ENCODE measurements at regions of chr13 and their contacts with region 1.

Region 1: DNA sequence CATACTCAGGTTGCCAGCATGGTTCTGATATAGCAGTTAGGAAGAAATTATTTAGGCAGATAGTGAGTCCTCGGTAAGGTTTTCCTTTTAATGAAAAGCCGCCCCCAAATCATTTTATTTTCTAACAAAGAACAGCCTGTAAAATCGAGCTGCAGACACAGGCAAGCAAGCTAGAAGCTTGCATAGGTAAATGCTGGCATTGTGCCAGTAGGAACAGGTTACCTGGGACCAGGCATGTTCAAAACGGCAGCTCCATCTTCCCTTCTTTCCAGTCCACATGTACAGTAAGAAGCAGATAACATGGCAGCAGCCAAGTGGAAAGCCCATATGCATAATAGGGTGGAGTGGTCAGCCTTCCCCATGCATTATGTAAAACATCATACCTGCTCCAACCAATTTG is 71.1 kb downstream of the UGGT2 start:
- DNase-seq: no peak
- ATAC-seq: no peak
- H3K4me3 ChIP-seq: no peak overlapping the region
- H3K27ac ChIP-seq: no peak overlapping the region
- H3K4me1 ChIP-seq: no peaks in the 10 kb centered on the region
- H3K27me3 ChIP-seq: no peaks in the 10 kb centered on the region
- CTCF ChIP-seq: no peak
- EP300 ChIP-seq: no peak
- POLR2A ChIP-seq: no peak
- RAD21 ChIP-seq: no peak

Region 2: DNA sequence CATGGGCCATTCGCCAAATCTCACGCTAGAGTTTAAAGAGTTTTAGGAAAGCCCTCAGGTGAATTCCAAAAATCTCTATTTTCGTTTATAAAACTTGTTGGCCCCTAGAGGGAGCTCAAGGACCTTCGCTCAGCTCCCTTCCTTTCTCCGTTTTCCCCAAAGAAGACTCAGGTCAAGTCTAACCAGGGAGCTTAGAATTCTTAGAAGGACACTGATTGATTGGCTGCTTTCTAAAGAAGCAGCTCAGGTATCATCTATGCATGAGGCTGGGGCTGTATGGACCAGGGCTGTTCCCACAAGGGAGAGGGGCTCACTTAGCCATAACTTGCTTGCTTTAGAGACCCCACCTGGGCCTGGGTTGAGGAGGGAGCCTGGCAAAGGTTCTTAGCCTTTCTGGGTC is 358.1 kb before region 1 on chr13:
- CTCF ChIA-PET with region 1: interaction called, 4 read pairs
- POLR2A ChIA-PET with region 1: no interaction called
- in situ Hi-C with region 1: no loop called
- intact Hi-C with region 1: loop called (anchors 1 kb)
- DNase-seq: peak; percentile 29
- ATAC-seq: peak; percentile 71
- H3K4me3 ChIP-seq: no peak overlapping the region
- H3K27ac ChIP-seq: no peak overlapping the region
- H3K4me1 ChIP-seq: no peaks in the 10 kb centered on the region
- H3K27me3 ChIP-seq: no peaks in the 10 kb centered on the region
- CTCF ChIP-seq: peak; percentile 69
- EP300 ChIP-seq: no peak
- POLR2A ChIP-seq: no peak
- RAD21 ChIP-seq: no peak

Region 3: DNA sequence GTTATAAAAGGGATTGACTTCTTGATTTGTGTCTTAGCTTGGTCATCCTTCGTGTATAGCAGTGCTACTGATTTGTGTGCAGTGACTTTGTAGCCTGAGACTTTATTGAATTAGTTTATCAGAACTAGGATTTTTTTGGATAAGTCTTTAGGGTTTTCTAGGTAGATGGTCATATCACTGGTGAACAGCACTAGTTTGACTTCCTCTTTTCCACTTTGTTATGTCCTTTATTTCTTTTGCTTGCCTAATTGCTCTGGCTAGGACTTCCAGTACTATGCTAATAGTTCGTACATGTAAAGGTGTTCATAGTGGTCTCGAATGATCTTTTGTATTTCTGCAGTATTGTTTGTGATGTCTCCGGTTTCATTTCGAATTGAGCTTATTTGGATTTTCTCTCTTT is 159.8 kb before region 1 on chr13:
- CTCF ChIA-PET with region 1: no interaction called
- POLR2A ChIA-PET with region 1: no interaction called
- in situ Hi-C with region 1: no loop called
- intact Hi-C with region 1: no loop called
- DNase-seq: no peak
- ATAC-seq: no peak
- H3K4me3 ChIP-seq: no peak overlapping the region
- H3K27ac ChIP-seq: no peak overlapping the region
- H3K4me1 ChIP-seq: no peaks in the 10 kb centered on the region
- H3K27me3 ChIP-seq: no peaks in the 10 kb centered on the region
- CTCF ChIP-seq: no peak
- EP300 ChIP-seq: no peak
- POLR2A ChIP-seq: no peak
- RAD21 ChIP-seq: no peak

Region 4: GRCh38 chr13:95902741-95903140 is 79.4 kb before region 1 on chr13:
- CTCF ChIA-PET with region 1: no interaction called
- POLR2A ChIA-PET with region 1: no interaction called
- in situ Hi-C with region 1: no loop called
- intact Hi-C with region 1: no loop called
- DNase-seq: no peak
- ATAC-seq: no peak
- H3K4me3 ChIP-seq: no peak overlapping the region
- H3K27ac ChIP-seq: no peak overlapping the region
- H3K4me1 ChIP-seq: no peaks in the 10 kb centered on the region
- H3K27me3 ChIP-seq: no peaks in the 10 kb centered on the region
- CTCF ChIP-seq: no peak
- EP300 ChIP-seq: no peak
- POLR2A ChIP-seq: no peak
- RAD21 ChIP-seq: no peak

Measured in HepG2 (cell line).